CD14-positive monocyte (primary cell): ENCODE measurements at regions of chr1 and their contacts with region 1.

Region 1: DNA sequence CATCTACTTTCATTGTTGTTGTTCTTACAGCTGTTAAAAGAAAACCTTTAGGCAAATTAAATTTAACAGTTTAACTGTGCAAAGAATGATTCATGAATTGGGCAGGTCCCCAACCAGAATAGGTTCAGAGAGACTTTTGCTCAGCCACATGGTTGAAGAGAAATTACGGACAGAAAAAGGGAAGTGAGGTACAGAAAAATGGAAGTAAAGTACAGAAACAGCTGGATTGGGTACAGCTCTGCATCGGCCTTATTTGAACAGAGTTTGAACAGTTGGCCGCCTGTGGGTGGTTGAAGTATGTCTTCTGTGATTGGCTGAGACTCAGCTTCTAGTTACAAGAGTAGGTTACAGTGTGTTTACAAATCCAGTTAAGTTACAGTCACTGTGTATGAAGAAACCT is 210.1 kb downstream of the FGGY start:
- DNase-seq: peak; percentile 88 to 95 (median 92)
- H3K4me3 ChIP-seq: no peak overlapping the region
- H3K4me3 Mint-ChIP-seq: peak overlapping the region in 1 of 2 donors; percentile 4
- H3K27ac ChIP-seq: peak overlapping the region in 1 of 2 donors; percentile 64
- H3K27ac Mint-ChIP-seq: peak overlapping the region; percentile 29 to 96 (median 81)
- H3K4me1 ChIP-seq: peaks cover 12 to 18% of the 10 kb centered on the region in 2 donors
- H3K4me1 Mint-ChIP-seq: peaks cover 14% of the 10 kb centered on the region
- H3K27me3 ChIP-seq: no peaks in the 10 kb centered on the region
- H3K27me3 Mint-ChIP-seq: no peaks in the 10 kb centered on the region
- CTCF ChIP-seq: no peak

Region 2: GRCh38 chr1:59296358-59297256 is 210.3 kb before region 1 on chr1 and contains the start of gene FGGY:
- intact Hi-C with region 1: loop called in 1 of 2 experiments (anchors 10 kb)
- DNase-seq: peak; percentile 98 to 99 (median 99)
- H3K4me3 ChIP-seq: peak within 1 kb of the TSS; percentile 50 to 90 (median 85)
- H3K4me3 Mint-ChIP-seq: peak within 1 kb of the TSS; percentile 79 to 90
- H3K27ac ChIP-seq: peak within 1 kb of the TSS; percentile 95 to 99
- H3K27ac Mint-ChIP-seq: peak within 1 kb of the TSS; percentile 96 to 99 (median 97)
- H3K4me1 ChIP-seq: peaks cover 42 to 48% of the 10 kb centered on the region in 2 donors
- H3K4me1 Mint-ChIP-seq: peaks cover 45% of the 10 kb centered on the region
- H3K27me3 ChIP-seq: no peaks in the 10 kb centered on the region
- H3K27me3 Mint-ChIP-seq: peaks cover 0 to 3% (median 0%) of the 10 kb centered on the region in 3 donors
- CTCF ChIP-seq: no peak
- polyA plus RNA-seq, gene FGGY: 2.3 to 4.3 (median 2.9) TPM

Region 3: DNA sequence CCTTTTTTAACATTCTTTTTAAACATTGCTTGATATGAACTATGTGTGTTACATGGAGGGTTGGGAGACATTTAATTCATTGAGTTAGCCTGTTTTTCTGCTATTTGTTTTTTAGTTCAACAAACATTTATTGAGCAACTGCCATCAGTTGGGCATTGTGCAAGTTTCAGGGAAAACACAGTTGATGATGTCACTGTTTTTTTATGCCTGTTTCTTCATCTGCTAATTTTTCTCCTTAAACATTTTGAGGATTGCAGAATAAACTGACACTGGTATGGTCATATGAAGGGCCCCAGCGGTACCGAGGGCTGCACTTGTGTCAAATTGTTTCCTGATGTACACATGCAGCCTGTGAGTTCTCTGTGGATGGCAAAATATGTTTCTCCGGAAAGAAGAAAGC is 43.0 kb after region 1 on chr1:
- intact Hi-C with region 1: loop called in 1 of 2 experiments (anchors 2 kb)
- DNase-seq: peak; percentile 76 to 89 (median 88)
- H3K4me3 ChIP-seq: peak overlapping the region in 2 of 3 experiments; percentile 9 to 37
- H3K4me3 Mint-ChIP-seq: peak overlapping the region; percentile 21 to 62
- H3K27ac ChIP-seq: peak overlapping the region; percentile 60 to 83
- H3K27ac Mint-ChIP-seq: peak overlapping the region; percentile 86 to 98 (median 94)
- H3K4me1 ChIP-seq: peaks cover 29 to 36% of the 10 kb centered on the region in 2 donors
- H3K4me1 Mint-ChIP-seq: peaks cover 36% of the 10 kb centered on the region
- H3K27me3 ChIP-seq: no peaks in the 10 kb centered on the region
- H3K27me3 Mint-ChIP-seq: peaks cover 0 to 2% (median 0%) of the 10 kb centered on the region in 3 donors
- CTCF ChIP-seq: no peak